ENCODE measurements at regions of chr1 and their contacts with region 1.

Region 1: DNA sequence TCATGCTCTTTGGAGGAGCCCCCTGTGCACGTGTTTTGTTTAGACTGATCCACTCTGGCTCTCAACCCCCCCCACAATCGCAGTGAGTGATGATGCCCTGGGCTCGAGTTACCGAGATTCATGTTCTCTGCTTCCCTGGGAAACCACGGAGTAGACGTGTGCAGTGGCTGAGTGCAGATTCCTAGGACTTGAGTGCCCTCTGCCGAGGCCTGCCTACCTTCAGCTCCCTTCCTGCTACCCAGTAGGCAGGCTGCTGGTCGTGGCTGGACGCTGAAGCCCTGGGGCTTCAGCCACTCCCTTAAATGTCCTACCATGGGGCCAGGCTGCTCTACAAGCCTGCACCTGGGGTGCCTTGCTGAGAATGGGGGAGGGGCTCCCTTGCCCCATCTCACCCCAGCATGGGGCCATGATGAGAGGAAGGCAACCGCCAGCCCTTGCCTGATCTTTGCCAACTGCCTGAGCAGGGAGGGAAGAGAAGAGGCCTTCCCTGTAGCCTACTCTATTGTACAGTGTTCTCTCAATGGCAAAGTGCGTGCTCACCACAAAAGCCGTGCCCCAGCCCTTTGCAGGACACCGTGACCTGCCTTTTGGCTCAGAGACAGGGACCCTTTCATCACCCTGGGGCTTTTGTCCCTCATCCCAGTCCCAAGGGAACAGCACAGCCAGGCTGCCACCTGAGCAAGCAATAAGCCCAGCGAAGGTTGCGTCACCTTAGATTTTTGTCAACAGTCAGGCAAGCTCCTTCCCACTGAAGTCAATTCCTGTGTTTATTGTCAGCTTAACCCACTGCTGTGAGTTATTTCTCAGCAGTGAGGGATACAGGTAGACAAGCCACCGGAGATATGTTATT is 4.1 kb upstream of the GRIK3 start:
- ATAC-seq: peak; percentile 74 to 86 (median 80)
- H3K4me3 ChIP-seq: no peak overlapping the region
- H3K27ac ChIP-seq: peak overlapping the region in 1 of 2 donors; percentile 52
- H3K4me1 ChIP-seq: peaks cover 66 to 76% of the 10 kb centered on the region in 2 donors

Region 2: DNA sequence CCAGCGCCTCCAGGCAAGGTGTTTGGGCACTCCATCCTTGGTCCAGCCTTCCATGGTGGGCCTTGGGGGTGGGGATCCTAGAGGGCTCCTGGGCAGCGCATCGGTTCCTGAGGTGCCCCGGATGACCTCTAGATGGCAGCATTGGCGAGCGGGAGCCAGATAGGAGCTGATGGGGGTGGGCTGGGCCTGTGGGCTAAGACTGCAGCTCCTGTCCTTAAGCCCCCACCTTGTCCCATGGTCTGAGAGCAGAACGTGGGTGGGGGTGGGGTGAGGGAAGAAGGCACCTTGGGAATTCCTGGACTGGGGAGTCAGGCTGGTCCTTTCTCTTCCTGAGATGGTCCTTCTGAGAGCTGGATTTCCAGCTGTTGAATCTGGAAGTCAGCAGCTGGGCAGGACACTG is 462.3 kb before region 1 on chr1:
- in situ Hi-C with region 1: loop called in 5 of 9 experiments (anchors 10 to 25 kb)
- ATAC-seq: peak; percentile 80 to 99 (median 86)
- H3K4me3 ChIP-seq: no peak overlapping the region
- H3K27ac ChIP-seq: peak overlapping the region; percentile 1 to 2
- H3K4me1 ChIP-seq: peaks cover 28 to 33% of the 10 kb centered on the region in 2 donors

Region 3: GRCh38 chr1:36703526-36704208 is 334.8 kb before region 1 on chr1:
- in situ Hi-C with region 1: loop called in 4 of 9 experiments (anchors 25 kb)
- ATAC-seq: peak; percentile 94 to 100 (median 96)
- H3K4me3 ChIP-seq: no peak overlapping the region
- H3K27ac ChIP-seq: peak overlapping the region in 1 of 2 donors; percentile 19
- H3K4me1 ChIP-seq: peaks cover 29 to 30% of the 10 kb centered on the region in 2 donors

Region 4: DNA sequence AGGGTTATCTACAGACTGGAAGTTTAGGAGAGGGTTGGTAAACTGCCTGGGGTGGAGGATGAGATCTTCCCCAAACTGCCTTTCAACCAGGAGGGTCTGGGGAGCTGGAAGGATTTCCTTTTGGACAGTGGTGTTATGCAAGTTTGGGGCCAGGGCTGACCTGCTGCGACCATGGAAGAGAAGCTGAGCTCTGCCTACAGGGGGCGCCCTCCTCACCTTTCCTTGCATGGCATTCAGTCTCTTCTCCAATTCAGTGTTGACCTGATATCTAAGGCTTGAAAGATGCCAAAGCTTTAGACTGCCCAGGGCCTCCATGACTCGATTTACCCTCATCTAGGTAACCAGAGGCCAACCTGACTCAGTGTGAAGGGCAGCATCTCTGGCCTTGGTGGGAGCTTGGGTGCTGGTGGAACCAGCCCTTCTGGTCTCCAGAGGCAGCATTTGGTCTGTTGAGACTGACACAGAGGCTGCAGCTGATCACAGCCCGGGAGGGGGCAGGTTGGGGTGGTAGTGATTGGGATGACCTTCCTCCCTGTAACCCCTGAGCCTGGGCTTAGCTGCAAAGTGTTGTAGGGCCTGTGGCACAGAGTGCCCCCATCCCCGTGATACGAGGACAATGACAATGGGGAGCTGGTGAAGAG is 174.2 kb before region 1 on chr1:
- in situ Hi-C with region 1: no loop called
- ATAC-seq: peak in 1 of 8 experiments; percentile 5
- H3K4me3 ChIP-seq: no peak overlapping the region
- H3K27ac ChIP-seq: peak overlapping the region in 1 of 2 donors; percentile 2
- H3K4me1 ChIP-seq: peaks cover 19 to 24% of the 10 kb centered on the region in 2 donors

Region 5: DNA sequence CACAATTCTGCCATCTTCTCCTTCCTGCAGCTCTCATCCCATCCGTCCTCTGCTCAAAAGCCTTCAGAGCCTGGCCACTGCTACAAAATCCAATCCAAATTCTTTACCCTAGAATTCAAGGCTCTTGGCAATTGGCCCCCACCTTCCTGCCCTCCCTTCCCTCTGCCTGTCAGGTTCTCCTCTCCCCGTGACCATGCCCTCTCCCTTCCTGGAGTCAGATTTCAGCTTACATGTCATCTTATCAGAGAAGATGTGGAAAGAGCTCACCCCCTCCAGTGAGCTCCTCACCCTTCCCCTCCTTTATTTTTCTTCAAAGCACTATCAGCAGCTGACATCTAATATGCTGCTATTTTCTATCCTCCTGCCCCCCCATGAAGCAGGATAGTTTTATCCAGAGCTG is 91.1 kb before region 1 on chr1:
- in situ Hi-C with region 1: loop called in 1 of 9 experiments (anchors 25 kb)
- ATAC-seq: no peak
- H3K4me3 ChIP-seq: no peak overlapping the region
- H3K27ac ChIP-seq: no peak overlapping the region
- H3K4me1 ChIP-seq: peaks cover 22 to 30% of the 10 kb centered on the region in 2 donors

Region 6: GRCh38 chr1:37410815-37411214 is 372.4 kb after region 1 on chr1:
- in situ Hi-C with region 1: loop called in 1 of 9 experiments (anchors 25 kb)
- ATAC-seq: peak in 7 of 8 experiments; percentile 11 to 64 (median 24)
- H3K4me3 ChIP-seq: no peak overlapping the region
- H3K27ac ChIP-seq: peak overlapping the region in 1 of 2 donors; percentile 37
- H3K4me1 ChIP-seq: peaks cover 21 to 33% of the 10 kb centered on the region in 2 donors

Region 7: GRCh38 chr1:37434292-37434907 is 395.9 kb after region 1 on chr1:
- in situ Hi-C with region 1: loop called in 2 of 9 experiments (anchors 25 kb)
- ATAC-seq: peak; percentile 71 to 95 (median 78)
- H3K4me3 ChIP-seq: no peak overlapping the region
- H3K27ac ChIP-seq: no peak overlapping the region
- H3K4me1 ChIP-seq: peaks cover 34 to 39% of the 10 kb centered on the region in 2 donors